Heart right ventricle (tissue), 16 donors: ENCODE measurements at regions of chr3 and their contacts with region 1.

Region 1: DNA sequence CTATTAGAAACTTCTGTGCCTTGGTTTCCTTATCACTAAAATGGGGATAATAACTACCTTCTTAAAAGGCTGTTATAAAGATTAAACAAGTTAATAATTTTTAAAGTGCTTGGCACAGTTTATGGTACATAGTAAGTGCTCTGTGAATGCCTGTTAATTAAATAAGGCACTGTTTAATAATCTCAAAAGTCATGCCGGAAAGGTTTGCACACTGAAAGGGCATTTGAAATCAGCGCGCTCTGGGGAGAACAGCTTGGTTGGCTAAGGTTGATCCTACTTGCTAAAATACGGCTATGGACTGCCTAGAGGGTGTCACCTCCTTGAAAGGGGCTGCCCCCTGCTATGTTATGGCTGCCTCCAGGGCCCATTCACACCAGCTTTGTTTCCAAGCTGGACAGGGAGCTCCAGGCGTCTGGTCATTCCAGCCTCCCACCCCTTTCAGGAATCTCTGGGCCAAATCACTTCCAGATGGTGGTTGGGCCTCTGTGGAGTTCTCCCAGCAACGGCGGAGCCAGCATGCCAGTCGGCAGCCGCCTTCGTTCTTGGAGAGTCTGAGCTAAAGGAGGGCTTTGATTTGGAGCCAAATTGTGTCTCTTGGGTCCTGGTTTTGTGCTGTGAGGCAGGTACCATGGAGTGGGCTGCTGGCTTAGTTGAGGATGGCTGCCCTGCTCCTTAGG is 5.9 kb downstream of the FLNB start:
- DNase-seq: peak; percentile 31
- ATAC-seq: peak; percentile 20 to 75 (median 34)
- H3K4me3 ChIP-seq: no peak overlapping the region
- H3K27ac ChIP-seq: peak overlapping the region in 3 of 10 donors; percentile 11 to 63 (median 57)
- H3K4me1 ChIP-seq: peaks cover 2 to 96% (median 54%) of the 10 kb centered on the region in 9 donors
- H3K27me3 ChIP-seq: no peaks in the 10 kb centered on the region
- CTCF ChIP-seq: no peak

Region 2: DNA sequence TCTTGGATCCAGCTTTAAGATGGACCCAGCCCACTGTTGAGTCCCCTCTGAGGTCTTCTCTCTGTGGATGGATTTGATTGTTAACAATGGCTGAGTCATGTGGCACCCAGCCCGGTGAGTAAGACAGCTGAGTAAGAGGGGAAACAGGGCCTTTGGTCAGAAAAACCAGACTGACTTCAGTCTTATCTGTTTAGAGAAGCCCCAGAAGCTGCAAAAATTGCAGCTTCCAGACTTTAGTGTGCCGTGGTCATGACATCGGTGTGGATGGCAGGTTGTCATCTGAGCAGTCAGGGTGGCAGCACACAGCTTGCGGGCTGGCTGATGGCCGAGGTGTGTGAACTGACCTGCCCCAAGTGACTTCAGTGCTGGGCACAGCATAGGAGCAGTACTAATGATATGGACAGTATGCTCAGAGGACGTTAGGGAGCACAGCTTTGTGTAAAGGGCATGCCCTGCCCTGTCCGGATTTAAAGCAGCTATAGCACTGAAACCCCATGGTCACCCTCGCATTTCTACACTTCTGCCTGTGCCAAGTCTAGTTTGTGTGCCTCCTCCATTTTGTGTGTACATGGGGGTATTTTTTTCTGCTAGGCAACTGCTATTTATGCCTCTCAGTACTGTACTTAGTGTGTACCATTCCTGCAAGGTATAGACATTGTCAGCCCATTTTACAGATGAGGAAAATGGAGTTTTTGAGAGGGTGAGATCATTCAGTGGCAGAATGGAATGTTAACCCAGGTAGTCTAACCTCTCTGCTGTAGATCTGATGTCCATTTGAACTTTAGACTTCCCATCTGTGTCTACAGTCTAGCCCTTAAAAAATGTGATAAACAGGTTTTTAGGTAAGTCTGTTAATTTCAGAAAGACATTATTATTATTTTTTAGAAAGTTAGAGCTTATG is 38.5 kb after region 1 on chr3:
- intact Hi-C with region 1: loop called in 3 of 10 experiments (anchors 5 kb)
- DNase-seq: peak; percentile 62 to 81
- ATAC-seq: peak; percentile 46 to 80 (median 62)
- H3K4me3 ChIP-seq: no peak overlapping the region
- H3K27ac ChIP-seq: peak overlapping the region in 9 of 10 donors; percentile 2 to 91 (median 64)
- H3K4me1 ChIP-seq: peaks cover 16 to 72% (median 53%) of the 10 kb centered on the region in 9 donors
- H3K27me3 ChIP-seq: no peaks in the 10 kb centered on the region
- CTCF ChIP-seq: no peak

Region 3: DNA sequence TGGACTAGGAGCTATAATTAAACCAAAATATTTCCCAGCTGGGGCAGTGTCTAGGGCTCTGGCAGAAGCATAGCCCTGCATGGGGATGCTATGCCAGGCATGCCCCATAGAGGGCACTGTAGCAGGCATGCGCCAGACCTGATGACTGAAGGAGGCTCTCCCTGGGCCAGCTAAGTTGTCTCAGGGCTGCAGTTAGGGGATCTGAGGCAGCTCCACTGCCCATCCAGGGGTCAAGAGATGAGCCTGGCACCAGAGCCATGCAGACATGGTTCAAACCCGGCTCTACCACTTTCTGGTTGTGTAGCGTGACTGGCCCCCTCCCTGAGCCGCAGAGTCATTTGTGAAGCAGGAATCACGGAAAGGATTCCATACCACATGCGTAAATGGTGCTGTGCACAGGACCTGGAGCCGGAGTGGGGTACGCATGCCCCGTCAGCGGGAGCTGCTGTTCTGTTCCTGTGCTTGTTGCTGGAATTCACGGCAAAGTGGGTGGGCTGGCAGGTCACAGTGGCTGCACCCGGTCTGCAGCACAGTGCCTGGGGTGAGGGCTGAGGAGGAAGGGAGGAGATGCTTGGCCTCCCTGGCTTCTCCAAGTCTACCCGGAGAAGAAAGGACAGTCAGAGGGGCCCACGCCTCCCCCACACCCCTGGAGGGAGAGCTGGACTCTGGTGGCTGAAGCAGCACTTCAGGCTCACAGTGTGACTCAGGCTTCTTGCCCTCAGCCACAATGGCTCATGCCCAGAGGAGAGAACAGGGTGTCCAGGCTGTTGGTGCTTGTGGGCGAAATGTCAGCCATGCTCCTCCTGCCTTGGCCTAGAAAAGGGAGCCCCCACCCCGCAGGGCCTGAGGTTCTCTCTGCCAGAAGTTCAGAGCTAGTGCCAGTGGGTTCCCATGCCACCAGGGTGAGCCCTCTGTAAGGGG is 153.6 kb after region 1 on chr3:
- intact Hi-C with region 1: loop called in 9 of 10 experiments (anchors 2 to 5 kb)
- DNase-seq: peak; percentile 72 to 79
- ATAC-seq: peak; percentile 70 to 84 (median 81)
- H3K4me3 ChIP-seq: no peak overlapping the region
- H3K27ac ChIP-seq: peak overlapping the region; percentile 28 to 91 (median 72)
- H3K4me1 ChIP-seq: peaks cover 7 to 55% (median 32%) of the 10 kb centered on the region in 9 donors
- H3K27me3 ChIP-seq: no peaks in the 10 kb centered on the region
- CTCF ChIP-seq: peak; percentile 64 to 94 (median 88)